WTC11 (cell line): ENCODE measurements at regions of chr1 and their contacts with region 1.

Region 1: DNA sequence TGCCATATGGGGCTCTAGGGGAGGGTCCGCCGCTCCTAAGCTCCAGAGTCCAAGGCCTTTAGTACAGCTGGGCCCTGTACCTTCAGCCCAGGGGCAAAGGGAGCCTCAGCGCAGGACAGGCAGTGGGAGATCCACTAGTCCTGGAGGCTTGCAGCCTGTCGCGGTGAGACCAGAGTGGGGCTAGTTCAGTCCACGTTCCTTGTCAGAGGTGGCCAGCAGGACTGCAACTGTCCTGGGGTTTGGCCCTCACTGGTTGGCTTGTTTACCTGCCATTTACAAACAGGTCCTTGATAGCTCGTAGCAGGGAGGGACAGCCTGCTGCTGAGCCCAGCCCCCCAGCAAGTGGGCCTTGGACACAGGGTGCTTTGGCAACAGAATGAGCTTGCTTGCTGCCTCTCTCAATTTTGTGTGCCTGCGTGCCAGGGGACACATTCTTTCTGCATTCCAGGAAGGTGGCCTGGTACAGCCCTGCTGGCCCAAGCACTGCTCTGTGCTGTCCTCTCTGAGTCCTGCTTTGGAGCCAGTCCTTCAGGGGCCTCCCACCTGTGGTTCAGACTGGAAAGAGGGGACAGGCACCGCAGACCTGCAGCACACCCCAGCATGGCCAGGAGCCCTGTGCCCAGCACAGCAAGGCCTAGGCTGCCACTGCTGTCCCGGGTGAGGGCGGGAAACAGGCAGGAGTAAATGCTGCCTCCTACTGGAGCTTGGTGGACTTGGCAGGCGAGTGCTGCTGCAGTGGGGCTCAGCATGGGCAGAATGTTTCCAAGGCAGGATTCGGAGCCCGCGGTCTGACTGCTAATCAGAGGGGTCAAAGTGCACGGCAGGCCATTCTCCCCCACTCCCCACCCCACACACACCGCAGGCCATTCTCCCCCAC is 15.2 kb downstream of the H6PD start:
- DNase-seq: peak; percentile 80
- ATAC-seq: peak; percentile 80
- H3K4me3 Mint-ChIP-seq: no peak overlapping the region
- H3K27ac Mint-ChIP-seq: no peak overlapping the region
- H3K4me1 Mint-ChIP-seq: peaks cover 42% of the 10 kb centered on the region
- H3K27me3 Mint-ChIP-seq: no peaks in the 10 kb centered on the region
- CTCF ChIP-seq: peak; percentile 72

Region 2: DNA sequence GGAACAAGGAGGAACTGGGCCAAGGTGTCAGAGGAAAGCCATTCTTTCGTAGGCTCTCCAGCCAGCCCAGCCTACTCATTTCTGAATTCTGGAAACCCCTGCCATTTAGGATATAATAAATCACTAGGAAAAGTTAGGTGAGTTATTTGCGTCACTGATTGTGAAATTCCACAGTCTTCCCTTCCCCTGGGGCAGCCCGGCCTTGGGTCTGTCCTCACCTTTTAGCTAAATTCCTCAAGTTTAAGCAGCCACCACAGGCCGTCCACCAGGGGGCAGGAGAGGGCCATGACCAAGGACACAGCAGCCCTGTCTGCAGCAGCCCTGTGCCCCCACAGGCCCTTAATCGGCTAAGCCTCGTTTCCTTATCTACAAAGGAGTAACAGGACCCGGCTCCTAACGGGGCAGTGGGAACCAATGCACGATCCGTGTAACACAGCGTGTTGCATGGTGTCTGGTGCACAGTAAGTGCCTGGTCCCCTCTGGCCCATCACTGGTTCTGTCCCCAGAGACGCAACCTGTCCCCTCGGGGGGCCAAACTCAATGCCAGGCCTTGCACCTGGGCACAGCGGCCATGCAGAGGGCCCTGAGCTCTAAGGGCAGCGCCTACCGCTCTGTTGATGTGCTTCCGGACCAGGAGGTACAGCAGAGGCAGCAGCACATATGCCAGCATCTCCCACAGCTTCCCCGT is 139.0 kb before region 1 on chr1:
- CTCF ChIA-PET with region 1: interaction called, 17 read pairs
- POLR2A ChIA-PET with region 1: no interaction called
- DNase-seq: peak; percentile 98
- ATAC-seq: peak; percentile 96
- H3K4me3 Mint-ChIP-seq: no peak overlapping the region
- H3K27ac Mint-ChIP-seq: no peak overlapping the region
- H3K4me1 Mint-ChIP-seq: no peaks in the 10 kb centered on the region
- H3K27me3 Mint-ChIP-seq: no peaks in the 10 kb centered on the region
- CTCF ChIP-seq: peak; percentile 94

Region 3: GRCh38 chr1:9201401-9202239 is 48.2 kb before region 1 on chr1:
- CTCF ChIA-PET with region 1: interaction called, 40 read pairs
- POLR2A ChIA-PET with region 1: no interaction called
- DNase-seq: no peak
- ATAC-seq: no peak
- H3K4me3 Mint-ChIP-seq: peak overlapping the region; percentile 57
- H3K27ac Mint-ChIP-seq: no peak overlapping the region
- H3K4me1 Mint-ChIP-seq: peaks cover 28% of the 10 kb centered on the region
- H3K27me3 Mint-ChIP-seq: peaks cover 81% of the 10 kb centered on the region
- CTCF ChIP-seq: no peak

Region 4: DNA sequence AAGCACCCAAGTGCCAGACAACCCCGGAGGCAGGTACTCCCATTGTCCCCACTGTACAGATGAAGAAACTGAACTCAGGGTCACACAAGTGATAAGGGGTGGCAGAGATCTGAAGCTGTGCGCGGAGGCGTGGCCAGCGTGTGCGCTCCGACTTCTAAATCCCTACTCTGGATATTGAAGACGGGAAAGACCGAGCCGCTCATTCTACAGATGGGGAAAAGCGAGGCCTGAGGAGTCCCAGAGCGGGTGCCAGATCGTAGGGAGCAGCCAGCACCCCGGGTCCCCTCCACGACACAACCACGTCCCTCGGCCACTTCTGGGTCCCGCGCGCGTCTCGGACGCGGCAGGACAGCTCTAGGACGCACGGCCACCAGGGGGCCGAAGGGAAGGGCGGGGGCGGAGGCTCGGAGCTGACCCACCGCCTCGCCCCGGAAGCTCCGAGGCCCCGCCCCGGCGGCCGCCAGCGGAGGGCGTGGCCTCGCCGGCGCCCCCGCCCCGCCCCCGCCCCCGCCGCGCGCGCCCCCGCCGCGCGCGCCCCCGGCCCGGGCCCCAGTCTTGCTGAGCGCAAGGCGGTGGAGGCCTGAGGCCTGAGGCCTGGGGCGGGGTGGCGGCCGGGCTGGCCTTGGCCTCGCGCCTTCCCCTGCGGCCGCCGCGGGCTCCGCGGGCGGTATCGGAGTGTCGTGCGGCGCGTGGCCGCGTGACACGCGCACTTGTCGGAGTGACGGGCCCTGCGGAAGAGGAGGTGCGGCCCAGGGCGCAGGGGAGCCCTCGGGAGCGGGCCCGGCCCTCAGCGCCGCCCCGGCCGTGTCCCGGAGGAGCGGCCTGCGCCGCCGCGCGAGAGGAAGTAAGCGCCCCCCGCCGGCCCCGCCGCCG is 15.3 kb before region 1 on chr1 and contains the start of gene H6PD:
- CTCF ChIA-PET with region 1: interaction called, 154 read pairs
- POLR2A ChIA-PET with region 1: interaction called, 4 read pairs
- DNase-seq: peak; percentile 76
- ATAC-seq: peak; percentile 82
- H3K4me3 Mint-ChIP-seq: peak within 1 kb of the TSS; percentile 85
- H3K27ac Mint-ChIP-seq: peak within 1 kb of the TSS; percentile 72
- H3K4me1 Mint-ChIP-seq: peaks cover 15% of the 10 kb centered on the region
- H3K27me3 Mint-ChIP-seq: peaks cover 2% of the 10 kb centered on the region; the same call in 1 of the 2 replicates
- CTCF ChIP-seq: no peak
- total RNA-seq, gene H6PD: 7.4 to 7.9 TPM (median 7.8 TPM) in 3 replicates

Region 5: GRCh38 chr1:9275567-9276034 is 25.8 kb after region 1 on chr1:
- CTCF ChIA-PET with region 1: interaction called, 12 read pairs
- POLR2A ChIA-PET with region 1: no interaction called
- DNase-seq: no peak
- ATAC-seq: no peak
- H3K4me3 Mint-ChIP-seq: no peak overlapping the region
- H3K27ac Mint-ChIP-seq: no peak overlapping the region
- H3K4me1 Mint-ChIP-seq: peaks cover 28% of the 10 kb centered on the region
- H3K27me3 Mint-ChIP-seq: no peaks in the 10 kb centered on the region; the same call in 1 of the 2 replicates
- CTCF ChIP-seq: no peak

Region 6: DNA sequence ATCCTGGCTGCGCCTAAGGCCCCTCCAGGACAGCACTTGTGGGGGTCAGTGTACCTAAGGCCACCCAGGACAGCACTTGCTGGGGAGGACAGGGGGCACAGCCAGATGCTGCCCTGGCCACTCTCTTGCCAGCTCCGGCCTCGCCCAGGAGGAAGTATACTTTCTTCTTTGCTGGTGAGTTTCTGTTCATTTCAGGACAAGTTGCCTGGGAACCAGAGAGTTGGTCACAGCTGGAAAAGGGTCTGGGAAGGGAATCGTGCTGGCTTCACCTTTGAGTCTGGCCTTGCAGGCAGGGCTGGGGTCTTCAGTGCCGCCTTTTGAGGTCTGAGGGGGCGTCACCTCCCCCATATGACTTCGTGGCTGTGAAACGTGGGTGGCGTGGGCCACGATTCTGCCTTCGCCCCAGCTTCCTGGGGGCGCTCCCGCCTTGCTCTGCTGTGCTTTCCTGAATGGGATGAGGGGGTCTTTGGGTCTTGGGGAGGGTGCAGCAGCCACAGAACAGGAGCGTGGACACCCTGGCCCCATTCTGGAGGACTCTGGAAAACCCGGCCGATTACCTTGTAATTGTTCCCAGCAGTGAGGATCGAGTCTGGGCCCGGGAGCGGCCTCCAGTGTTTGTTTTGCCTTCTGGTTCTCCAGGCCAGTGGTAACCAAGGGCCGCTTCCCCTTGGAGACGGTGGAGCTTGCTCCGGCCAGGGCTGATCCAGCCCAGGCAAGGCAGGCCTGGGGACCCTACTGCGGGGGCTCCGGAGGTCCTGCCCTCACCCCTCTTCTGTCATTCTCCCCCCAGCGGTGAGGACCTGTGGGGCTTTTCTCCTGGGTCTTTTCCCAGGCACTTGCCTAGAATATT is 88.8 kb after region 1 on chr1:
- CTCF ChIA-PET with region 1: no interaction called
- POLR2A ChIA-PET with region 1: no interaction called
- DNase-seq: no peak
- ATAC-seq: no peak
- H3K4me3 Mint-ChIP-seq: no peak overlapping the region
- H3K27ac Mint-ChIP-seq: peak overlapping the region; percentile 71
- H3K4me1 Mint-ChIP-seq: peaks cover 8% of the 10 kb centered on the region; the same call in 1 of the 2 replicates
- H3K27me3 Mint-ChIP-seq: no peaks in the 10 kb centered on the region
- CTCF ChIP-seq: no peak